ENCODE measurements at regions of chr17 and their contacts with region 1.

Region 1: DNA sequence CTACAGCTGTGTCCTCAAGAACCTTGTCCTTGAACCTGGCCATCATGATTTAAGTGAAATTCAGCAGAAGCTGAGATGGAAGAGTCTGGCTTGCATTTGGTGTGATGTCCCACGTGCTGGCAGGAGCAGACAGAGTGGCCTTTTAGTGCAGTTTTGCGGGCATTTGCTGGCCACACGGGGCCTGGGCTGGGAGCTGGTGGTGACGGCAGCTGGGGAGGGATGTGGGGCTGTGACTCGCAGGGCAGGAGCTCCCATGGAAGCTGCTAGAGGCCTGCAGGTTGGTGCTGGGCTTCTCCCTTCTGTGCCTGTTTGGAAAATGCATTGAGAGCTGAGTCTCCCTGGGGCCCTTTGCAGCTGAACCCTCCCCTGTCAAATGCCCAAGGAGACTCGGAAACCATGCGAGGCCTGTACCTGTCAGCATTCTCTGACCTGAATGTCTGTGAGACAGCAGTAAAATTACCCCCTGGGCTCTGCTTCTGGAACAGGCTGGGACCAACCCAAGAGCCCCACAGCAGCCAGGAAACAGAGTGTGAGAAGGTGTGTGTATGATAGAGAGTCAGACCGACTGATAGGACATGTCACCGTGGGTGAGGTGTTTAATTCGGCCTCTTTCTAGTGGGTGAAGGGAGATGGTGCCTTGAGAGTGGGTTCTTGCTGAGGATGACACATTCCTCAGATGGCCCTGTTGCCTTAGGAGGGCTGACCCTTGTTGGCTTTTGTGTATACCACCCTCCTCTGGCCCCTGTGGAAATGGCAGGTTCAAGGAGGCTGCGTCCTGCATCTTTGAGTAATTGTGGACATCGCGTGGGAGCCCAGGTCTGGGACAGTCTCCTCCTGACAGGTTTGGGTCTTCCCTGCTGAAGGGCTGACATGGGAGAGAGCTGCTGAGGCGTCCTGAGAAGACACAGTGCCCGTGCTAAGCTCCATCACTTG is 145.5 kb downstream of the MSI2 start:
- DNase-seq: no peak
- ATAC-seq: peak; percentile 17

Region 2: GRCh38 chr17:56424543-56425044 is 977.2 kb before region 1 on chr17:
- intact Hi-C with region 1: no loop called
- DNase-seq: no peak
- ATAC-seq: no peak

Region 3: DNA sequence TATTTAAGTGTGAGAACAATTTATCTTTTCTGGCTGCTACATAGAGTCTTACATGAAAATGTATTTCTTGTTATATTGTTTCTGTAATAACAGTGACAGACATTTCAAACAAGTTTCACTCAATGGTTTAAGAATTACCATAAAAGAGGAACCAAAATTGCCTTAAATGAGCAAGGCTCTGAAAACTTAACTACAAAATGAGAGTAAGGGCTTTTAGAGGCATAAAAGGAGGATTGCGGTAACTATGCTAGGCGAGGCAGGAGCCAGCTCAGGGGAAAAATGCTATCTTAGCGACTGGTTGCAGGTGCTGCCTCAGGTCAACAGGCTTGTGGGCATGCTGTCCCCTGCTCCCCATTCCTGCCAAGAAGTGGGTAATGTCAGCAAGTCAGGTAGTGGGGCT is 227.2 kb before region 1 on chr17:
- intact Hi-C with region 1: no loop called
- DNase-seq: no peak
- ATAC-seq: no peak

Region 4: GRCh38 chr17:57366558-57367351 is 35.1 kb before region 1 on chr17:
- intact Hi-C with region 1: loop called (anchors 5 kb)
- DNase-seq: no peak
- ATAC-seq: peak; percentile 75

Region 5: GRCh38 chr17:57480438-57481196 is 78.8 kb after region 1 on chr17:
- intact Hi-C with region 1: no loop called
- DNase-seq: no peak
- ATAC-seq: no peak

Measured in Right ventricle myocardium inferior (tissue), 1 donor.